GM12878 (cell line): ENCODE measurements at regions of chr14 and their contacts with region 1.

Region 1: GRCh38 chr14:33542338-33543287 is 408.3 kb downstream of the EGLN3 start:
- DNase-seq: no peak
- ATAC-seq: peak; percentile 63
- H3K4me3 ChIP-seq: no peak overlapping the region
- H3K27ac ChIP-seq: no peak overlapping the region
- H3K4me1 ChIP-seq: peaks cover 5% of the 10 kb centered on the region; the same call in 1 of the 2 replicates
- H3K27me3 ChIP-seq: no peaks in the 10 kb centered on the region
- CTCF ChIP-seq: no peak
- EP300 ChIP-seq: no peak
- POLR2A ChIP-seq: no peak
- RAD21 ChIP-seq: no peak

Region 2: GRCh38 chr14:33516898-33517436 is 25.6 kb before region 1 on chr14:
- CTCF ChIA-PET with region 1: interaction called, 22 read pairs
- POLR2A ChIA-PET with region 1: interaction called, 10 read pairs
- RAD21 ChIA-PET with region 1: interaction called, 50 read pairs
- SMC1A ChIA-PET with region 1: interaction called, 66 read pairs
- in situ Hi-C with region 1: no loop called
- intact Hi-C with region 1: no loop called
- DNase-seq: no peak
- ATAC-seq: peak; percentile 16; the same call in 1 of the 3 replicates
- H3K4me3 ChIP-seq: no peak overlapping the region
- H3K27ac ChIP-seq: no peak overlapping the region
- H3K4me1 ChIP-seq: no peaks in the 10 kb centered on the region
- H3K27me3 ChIP-seq: peaks cover 0 to 2% of the 10 kb centered on the region in 2 experiments; a peak in 2 of 4 replicates
- CTCF ChIP-seq: no peak
- EP300 ChIP-seq: no peak
- POLR2A ChIP-seq: no peak
- RAD21 ChIP-seq: no peak

Region 3: DNA sequence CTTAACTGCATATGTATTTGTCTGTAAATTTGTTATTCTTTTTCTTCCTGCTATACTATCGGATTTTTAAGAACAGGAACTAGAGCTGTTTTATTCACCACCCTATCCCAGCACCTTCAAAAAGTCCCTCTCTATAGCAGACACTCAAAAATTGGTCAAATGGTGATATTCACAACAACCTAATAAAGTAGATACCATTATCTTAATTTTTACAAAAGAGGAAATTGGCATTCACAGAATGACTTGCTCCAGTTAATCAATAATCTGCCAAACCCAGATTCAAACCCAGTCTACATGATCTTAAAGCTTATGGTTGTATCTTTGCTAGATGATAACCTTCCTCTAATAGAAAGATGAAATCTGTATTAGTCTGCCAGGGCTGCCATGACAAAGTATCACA is 18.4 kb before region 1 on chr14:
- CTCF ChIA-PET with region 1: interaction called, 7 read pairs
- POLR2A ChIA-PET with region 1: interaction called, 69 read pairs
- RAD21 ChIA-PET with region 1: interaction called, 102 read pairs
- SMC1A ChIA-PET with region 1: interaction called, 110 read pairs
- in situ Hi-C with region 1: no loop called
- intact Hi-C with region 1: no loop called
- DNase-seq: no peak
- ATAC-seq: peak; percentile 79
- H3K4me3 ChIP-seq: no peak overlapping the region
- H3K27ac ChIP-seq: no peak overlapping the region
- H3K4me1 ChIP-seq: no peaks in the 10 kb centered on the region
- H3K27me3 ChIP-seq: no peaks in the 10 kb centered on the region; a peak in 1 of 4 replicates
- CTCF ChIP-seq: no peak
- EP300 ChIP-seq: no peak; a peak in 1 of 4 replicates
- POLR2A ChIP-seq: no peak
- RAD21 ChIP-seq: no peak

Region 4: GRCh38 chr14:33556382-33557121 is 13.9 kb after region 1 on chr14:
- CTCF ChIA-PET with region 1: interaction called, 14 read pairs
- POLR2A ChIA-PET with region 1: interaction called, 86 read pairs
- RAD21 ChIA-PET with region 1: interaction called, 176 read pairs
- SMC1A ChIA-PET with region 1: interaction called, 215 read pairs
- in situ Hi-C with region 1: no loop called
- intact Hi-C with region 1: no loop called
- DNase-seq: no peak
- ATAC-seq: no peak
- H3K4me3 ChIP-seq: no peak overlapping the region
- H3K27ac ChIP-seq: no peak overlapping the region
- H3K4me1 ChIP-seq: no peaks in the 10 kb centered on the region
- H3K27me3 ChIP-seq: peaks cover 0 to 3% of the 10 kb centered on the region in 2 experiments; a peak in 1 of 4 replicates
- CTCF ChIP-seq: no peak
- EP300 ChIP-seq: no peak
- POLR2A ChIP-seq: no peak
- RAD21 ChIP-seq: no peak

Region 5: GRCh38 chr14:34237081-34237480 is 694.5 kb after region 1 on chr14:
- CTCF ChIA-PET with region 1: no interaction called
- POLR2A ChIA-PET with region 1: no interaction called
- RAD21 ChIA-PET with region 1: no interaction called
- SMC1A ChIA-PET with region 1: no interaction called
- in situ Hi-C with region 1: no loop called
- intact Hi-C with region 1: no loop called
- DNase-seq: no peak
- ATAC-seq: no peak
- H3K4me3 ChIP-seq: no peak overlapping the region
- H3K27ac ChIP-seq: no peak overlapping the region
- H3K4me1 ChIP-seq: no peaks in the 10 kb centered on the region
- H3K27me3 ChIP-seq: no peaks in the 10 kb centered on the region; a peak in 1 of 4 replicates
- CTCF ChIP-seq: no peak
- EP300 ChIP-seq: no peak
- POLR2A ChIP-seq: no peak
- RAD21 ChIP-seq: no peak